Cardiac septum (tissue), 1 donor: ENCODE measurements at regions of chrX and their contacts with region 1.

Region 1: GRCh38 chrX:15299941-15300851 is 15.2 kb downstream of the ASB11 start:
- DNase-seq: no peak

Region 2: GRCh38 chrX:15127014-15127413 is 173.2 kb before region 1 on chrX:
- intact Hi-C with region 1: no loop called
- DNase-seq: no peak

Region 3: DNA sequence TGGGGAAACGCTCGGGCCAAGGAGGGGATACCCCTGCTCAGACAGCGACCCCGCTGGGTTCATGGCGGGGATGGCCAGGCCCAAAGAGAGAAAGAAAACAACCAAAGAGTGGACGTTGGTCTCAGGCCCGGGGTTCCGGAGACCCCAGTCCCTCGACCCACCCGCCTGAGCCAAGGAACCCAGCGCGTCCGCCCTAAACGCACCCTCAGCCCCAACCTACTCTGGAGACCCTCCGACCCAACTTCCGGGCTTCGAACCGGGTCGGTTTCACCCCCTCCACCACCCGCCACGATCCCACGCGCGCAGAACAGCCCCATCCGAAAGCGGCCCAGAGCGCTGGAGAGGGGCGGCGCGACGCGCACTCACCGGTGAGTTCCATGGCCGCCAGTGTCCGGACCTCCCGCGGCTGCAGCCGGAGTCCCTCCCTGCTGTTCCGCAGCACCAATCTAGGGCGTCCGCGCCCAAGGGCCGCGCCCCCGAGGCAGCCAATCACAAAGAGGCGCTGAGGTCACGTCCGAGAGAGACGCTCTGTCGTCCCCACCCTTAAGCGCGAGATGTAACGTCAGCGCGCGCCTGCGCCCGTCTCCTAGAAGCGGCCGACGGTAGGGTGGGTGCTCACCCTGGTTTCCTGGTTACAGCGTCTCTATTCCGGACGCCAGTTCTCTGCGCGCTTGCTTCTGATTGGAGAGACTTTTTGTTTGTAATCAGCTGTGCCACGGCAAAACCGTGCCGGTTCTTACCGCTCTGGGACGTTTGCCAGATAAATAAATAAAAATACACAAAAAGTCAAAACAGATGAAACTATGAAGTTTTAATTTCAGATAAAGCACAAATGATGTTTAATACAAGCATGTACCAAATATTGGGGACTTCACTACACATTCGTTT is 35.2 kb after region 1 on chrX and contains the start of gene PIGA:
- intact Hi-C with region 1: loop called (anchors 5 kb)
- DNase-seq: peak; percentile 97
- total RNA-seq, gene PIGA: 6.8 TPM

Region 4: GRCh38 chrX:15448010-15448640 is 147.9 kb after region 1 on chrX:
- intact Hi-C with region 1: no loop called
- DNase-seq: no peak

Region 5: DNA sequence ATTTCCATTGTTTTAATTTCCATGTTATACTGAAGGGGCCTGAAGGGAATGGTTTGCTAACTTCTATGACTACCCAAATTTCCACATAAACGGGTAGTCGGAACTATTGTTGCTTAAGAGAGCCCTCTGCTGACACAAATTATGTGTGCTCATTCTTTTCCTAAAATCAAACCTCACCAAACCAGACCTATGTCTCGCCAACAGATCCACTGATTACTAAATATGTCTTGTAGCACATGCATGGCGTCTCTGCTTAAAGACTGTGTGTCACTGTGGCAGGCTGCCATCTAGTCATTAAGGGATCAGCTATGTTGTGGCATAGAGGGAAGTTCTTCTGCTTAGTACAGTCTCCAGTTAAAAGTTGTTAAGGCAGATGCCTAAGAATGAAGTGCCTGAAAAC is 167.8 kb after region 1 on chrX:
- intact Hi-C with region 1: loop called (anchors 5 kb)
- DNase-seq: no peak